H1 (cell line): ENCODE measurements at regions of chr4 and their contacts with region 1.

Region 1: GRCh38 chr4:40629401-40630334 is at the start of gene RBM47:
- DNase-seq: peak; percentile 79 to 88
- H3K4me3 ChIP-seq: peak within 1 kb of the TSS; percentile 66 to 79 (median 75)
- H3K27ac ChIP-seq: peak within 1 kb of the TSS; percentile 91
- H3K4me1 ChIP-seq: peaks cover 10 to 22% (median 20%) of the 10 kb centered on the region in 4 experiments; a peak in 6 of 7 replicates
- H3K27me3 ChIP-seq: no peaks in the 10 kb centered on the region
- CTCF ChIP-seq: no peak; a peak in 1 of 4 replicates
- EP300 ChIP-seq: no peak
- POLR2A ChIP-seq: peak; percentile 55 to 60
- RAD21 ChIP-seq: 0 out of 4 replicates have a peak, but pooled peaks of 1 of the 2 experiments have one; percentile 1
- total RNA-seq, gene RBM47: 73.1 and 78.9 TPM in 2 replicates

Region 2: GRCh38 chr4:40614031-40614430 is 15.6 kb before region 1 on chr4:
- CTCF ChIA-PET with region 1: interaction called, 3 read pairs
- POLR2A ChIA-PET with region 1: interaction called, 11 read pairs
- DNase-seq: no peak
- H3K4me3 ChIP-seq: no peak overlapping the region
- H3K27ac ChIP-seq: no peak overlapping the region
- H3K4me1 ChIP-seq: 0 out of 7 replicates have a peak, but pooled peaks cover 0 to 5% (median 0%) of the 10 kb centered on the region in 4 experiments
- H3K27me3 ChIP-seq: no peaks in the 10 kb centered on the region
- CTCF ChIP-seq: no peak
- EP300 ChIP-seq: no peak
- POLR2A ChIP-seq: no peak
- RAD21 ChIP-seq: no peak

Region 3: GRCh38 chr4:40648742-40649281 is 19.1 kb after region 1 on chr4:
- CTCF ChIA-PET with region 1: interaction called, 5 read pairs
- POLR2A ChIA-PET with region 1: interaction called, 13 read pairs
- DNase-seq: no peak
- H3K4me3 ChIP-seq: no peak overlapping the region
- H3K27ac ChIP-seq: 0 out of 2 replicates have a peak overlapping the region, but pooled peaks have one; percentile 16
- H3K4me1 ChIP-seq: peaks cover 4 to 16% (median 6%) of the 10 kb centered on the region in 4 experiments; a peak in 5 of 7 replicates
- H3K27me3 ChIP-seq: no peaks in the 10 kb centered on the region
- CTCF ChIP-seq: no peak
- EP300 ChIP-seq: no peak
- POLR2A ChIP-seq: no peak
- RAD21 ChIP-seq: no peak

Region 4: DNA sequence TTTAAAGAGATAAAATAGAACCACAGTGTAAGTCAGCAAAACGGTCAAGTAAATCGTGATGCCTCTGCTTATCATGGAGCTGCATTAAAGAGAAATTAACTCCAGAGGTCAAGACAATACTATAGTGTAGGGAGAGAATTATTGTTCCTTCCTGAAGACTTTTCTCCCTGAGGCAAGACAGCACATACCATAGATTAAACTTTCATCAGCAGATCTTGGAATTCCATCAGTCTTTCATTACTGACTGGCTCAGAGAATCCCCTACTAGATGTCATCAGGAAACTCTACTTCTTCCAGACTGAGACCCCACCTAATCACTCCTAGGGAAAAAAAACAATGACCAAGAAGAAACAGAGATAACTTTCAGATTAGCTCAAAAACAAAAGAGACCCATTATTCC is 251.4 kb after region 1 on chr4:
- CTCF ChIA-PET with region 1: no interaction called
- POLR2A ChIA-PET with region 1: no interaction called
- DNase-seq: no peak
- H3K4me3 ChIP-seq: no peak overlapping the region
- H3K27ac ChIP-seq: no peak overlapping the region
- H3K4me1 ChIP-seq: no peaks in the 10 kb centered on the region
- H3K27me3 ChIP-seq: no peaks in the 10 kb centered on the region
- CTCF ChIP-seq: no peak
- EP300 ChIP-seq: no peak
- POLR2A ChIP-seq: no peak
- RAD21 ChIP-seq: no peak